Dorsolateral prefrontal cortex (tissue), 120 donors: ENCODE measurements at regions of chr6 and their contacts with region 1.

Region 1: DNA sequence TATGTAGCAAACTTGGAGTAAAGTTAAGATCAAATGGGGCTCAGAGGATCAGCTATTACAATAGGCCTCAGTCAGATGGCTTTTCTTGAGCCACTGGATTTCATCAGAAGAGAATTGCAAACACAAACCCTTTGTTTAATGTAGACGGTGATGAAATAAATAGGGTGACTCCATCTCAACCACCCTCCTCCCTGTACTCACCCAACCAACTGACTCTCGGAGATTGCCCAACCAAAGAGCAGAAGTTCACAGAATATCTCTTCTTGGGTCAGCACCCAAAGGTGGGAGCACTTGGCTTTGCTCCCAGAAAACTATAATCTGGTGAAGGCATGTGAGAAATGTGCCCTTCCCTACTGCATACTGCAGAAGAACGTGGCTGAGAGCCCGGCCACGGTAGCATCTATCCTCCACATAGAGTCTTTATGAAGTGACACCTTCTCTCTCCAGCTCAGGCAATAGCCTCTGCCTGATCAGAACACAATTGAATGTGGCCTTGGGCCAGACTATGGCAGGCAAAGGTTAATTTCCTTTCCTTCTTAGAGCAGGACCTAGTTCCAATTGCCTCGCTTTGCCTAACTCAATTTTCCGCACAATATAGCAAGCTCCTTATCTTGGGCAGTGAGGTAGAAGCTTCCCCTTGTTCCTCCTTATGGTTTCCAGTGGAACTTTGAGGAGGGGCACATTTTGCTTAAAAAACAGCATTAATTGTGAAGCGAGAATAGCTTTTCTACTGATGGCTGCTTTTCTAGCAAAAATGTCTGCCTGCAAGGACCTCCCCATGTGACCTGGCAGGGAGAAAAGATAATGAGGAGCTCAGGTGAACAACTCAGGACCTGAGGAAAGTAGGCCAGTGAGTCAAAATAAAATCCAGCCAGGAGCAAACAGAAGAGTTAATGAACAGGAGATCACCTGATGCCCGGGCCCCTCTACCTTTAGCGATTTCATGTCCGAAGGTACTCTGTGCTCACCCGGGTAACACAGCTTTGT is 79.4 kb downstream of the GFOD1 start:
- DNase-seq: no peak
- H3K4me3 ChIP-seq: peak overlapping the region in 1 of 59 donors; percentile 33
- H3K27ac ChIP-seq: peak overlapping the region in 58 of 59 donors; percentile 50 to 95 (median 87)
- H3K27me3 ChIP-seq: no peaks in the 10 kb centered on the region
- CTCF ChIP-seq: peak in 1 of 56 donors; percentile 8

Region 2: GRCh38 chr6:13574149-13574570 is 166.2 kb after region 1 on chr6:
- intact Hi-C with region 1: loop called in 1 of 2 experiments (anchors 5 kb)
- DNase-seq: peak; percentile 70 to 92 (median 84)
- H3K4me3 ChIP-seq: peak overlapping the region; percentile 46 to 96 (median 87)
- H3K27ac ChIP-seq: peak overlapping the region; percentile 75 to 99 (median 97)
- H3K27me3 ChIP-seq: no peaks in the 10 kb centered on the region
- CTCF ChIP-seq: peak; percentile 26 to 78 (median 60)